Dendritic cell treated with granulocyte-macrophage colony-stimulating factor and Interleukin-4, amounts not matched to agents 40 ng/mL and 50 ng/mL, for 4 days (primary cell): ENCODE measurements at regions of chr13 and their contacts with region 1.

Region 1: DNA sequence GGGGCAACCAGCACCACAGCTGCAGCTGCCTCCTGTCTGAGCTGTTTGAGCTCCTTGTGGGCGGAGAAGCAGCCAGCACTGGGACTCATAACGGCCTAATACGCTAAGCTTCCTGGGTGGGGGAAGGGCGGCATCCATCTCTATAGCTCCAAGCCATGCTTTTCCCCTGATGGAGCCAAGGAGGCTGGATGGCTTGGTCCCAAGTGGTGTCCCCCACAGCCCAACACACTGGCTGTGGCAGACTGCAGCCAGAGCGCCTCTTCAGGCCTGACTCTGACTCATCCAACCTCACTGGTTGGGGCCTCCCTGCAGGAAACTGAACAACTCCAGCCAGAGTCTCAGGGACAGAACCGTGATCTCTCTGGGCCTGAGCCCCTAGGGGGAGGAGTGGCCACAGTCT is 537.3 kb downstream of the SUCLA2 start:
- H3K4me3 Mint-ChIP-seq: no peak overlapping the region
- H3K27ac Mint-ChIP-seq: no peak overlapping the region
- H3K4me1 Mint-ChIP-seq: no peaks in the 10 kb centered on the region
- H3K27me3 Mint-ChIP-seq: no peaks in the 10 kb centered on the region

Region 2: DNA sequence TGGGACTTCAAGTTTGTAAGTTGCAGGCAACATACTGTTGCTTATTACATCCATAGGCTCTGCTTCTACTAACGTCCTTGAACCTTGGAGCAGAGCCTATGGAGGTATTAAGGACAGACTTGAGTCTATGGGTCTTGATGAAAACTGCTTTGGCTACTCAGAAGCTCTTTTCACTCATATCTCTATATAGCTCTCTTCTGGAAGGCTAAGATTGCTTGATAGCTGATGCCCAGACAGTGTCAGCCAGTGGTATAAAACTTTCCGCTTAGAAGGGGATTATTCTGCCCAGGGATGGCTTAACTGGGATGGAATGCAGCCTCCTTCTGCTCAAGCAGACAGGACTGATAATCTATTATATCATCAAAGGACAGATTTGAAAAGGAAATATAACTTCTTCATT is 641.2 kb before region 1 on chr13:
- intact Hi-C with region 1: loop called (anchors 10 kb)
- H3K4me3 Mint-ChIP-seq: no peak overlapping the region
- H3K27ac Mint-ChIP-seq: no peak overlapping the region
- H3K4me1 Mint-ChIP-seq: peaks cover 2% of the 10 kb centered on the region
- H3K27me3 Mint-ChIP-seq: peaks cover 3% of the 10 kb centered on the region

Region 3: GRCh38 chr13:47407808-47408207 is 55.9 kb before region 1 on chr13:
- intact Hi-C with region 1: no loop called
- H3K4me3 Mint-ChIP-seq: no peak overlapping the region
- H3K27ac Mint-ChIP-seq: no peak overlapping the region
- H3K4me1 Mint-ChIP-seq: no peaks in the 10 kb centered on the region
- H3K27me3 Mint-ChIP-seq: no peaks in the 10 kb centered on the region